GM12878 (cell line): ENCODE measurements at regions of chr4 and their contacts with region 1.

Region 1: GRCh38 chr4:169189372-169189771 is 81.4 kb downstream of the SH3RF1 start:
- DNase-seq: no peak
- ATAC-seq: peak; percentile 89
- H3K4me3 ChIP-seq: peak overlapping the region; percentile 37
- H3K27ac ChIP-seq: peak overlapping the region; percentile 52
- H3K4me1 ChIP-seq: peaks cover 17% of the 10 kb centered on the region; the same call in 1 of the 2 replicates
- H3K27me3 ChIP-seq: no peaks in the 10 kb centered on the region
- CTCF ChIP-seq: no peak
- EP300 ChIP-seq: no peak
- POLR2A ChIP-seq: no peak
- RAD21 ChIP-seq: no peak

Region 2: DNA sequence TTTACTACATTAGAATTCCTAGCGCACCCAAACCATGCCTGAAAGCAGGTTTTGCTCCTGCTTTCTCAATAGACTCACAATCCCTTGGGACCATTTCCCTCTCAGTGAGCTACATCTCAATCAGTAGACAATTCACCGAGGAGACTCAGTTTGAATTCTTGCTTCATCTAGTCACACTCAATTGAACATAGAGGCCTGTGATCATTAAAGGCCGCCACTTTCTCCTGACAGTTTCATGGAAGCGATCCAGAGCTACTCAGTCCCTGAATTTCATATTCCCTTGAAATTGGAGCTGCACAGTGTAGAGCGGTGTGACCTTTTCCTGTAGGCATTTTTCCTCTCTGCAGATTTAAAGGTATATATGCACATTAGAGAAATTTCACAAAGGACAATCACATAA is 1761.2 kb before region 1 on chr4:
- CTCF ChIA-PET with region 1: no interaction called
- POLR2A ChIA-PET with region 1: no interaction called
- RAD21 ChIA-PET with region 1: no interaction called
- SMC1A ChIA-PET with region 1: no interaction called
- in situ Hi-C with region 1: no loop called
- intact Hi-C with region 1: no loop called
- DNase-seq: no peak
- ATAC-seq: no peak
- H3K4me3 ChIP-seq: no peak overlapping the region
- H3K27ac ChIP-seq: no peak overlapping the region
- H3K4me1 ChIP-seq: no peaks in the 10 kb centered on the region
- H3K27me3 ChIP-seq: no peaks in the 10 kb centered on the region
- CTCF ChIP-seq: no peak
- EP300 ChIP-seq: no peak
- POLR2A ChIP-seq: no peak
- RAD21 ChIP-seq: no peak

Region 3: DNA sequence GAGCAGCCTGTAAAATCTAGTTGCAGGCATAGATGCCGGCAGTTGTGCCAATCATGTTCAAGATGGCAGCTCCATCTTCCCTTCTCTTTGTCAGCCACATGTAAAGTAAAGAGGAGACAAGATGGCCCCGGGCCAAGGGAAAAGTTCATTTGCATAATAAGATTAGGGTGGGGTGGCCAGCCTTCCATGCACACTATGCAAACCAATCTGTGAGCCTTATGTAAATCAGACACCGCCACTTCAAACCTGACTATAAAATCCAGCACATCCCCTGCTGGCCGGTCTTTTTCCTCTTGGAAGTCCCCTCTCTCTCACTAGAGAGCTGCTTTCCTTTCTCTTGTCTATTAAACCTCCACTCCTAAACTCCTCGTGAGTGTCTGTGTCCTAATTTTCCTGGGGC is 100.4 kb before region 1 on chr4:
- CTCF ChIA-PET with region 1: no interaction called
- POLR2A ChIA-PET with region 1: no interaction called
- RAD21 ChIA-PET with region 1: no interaction called
- SMC1A ChIA-PET with region 1: no interaction called
- in situ Hi-C with region 1: no loop called
- intact Hi-C with region 1: no loop called
- DNase-seq: no peak
- ATAC-seq: no peak
- H3K4me3 ChIP-seq: no peak overlapping the region
- H3K27ac ChIP-seq: no peak overlapping the region
- H3K4me1 ChIP-seq: 0 out of 2 replicates have a peak, but pooled peaks cover 4% of the 10 kb centered on the region
- H3K27me3 ChIP-seq: no peaks in the 10 kb centered on the region
- CTCF ChIP-seq: no peak
- EP300 ChIP-seq: no peak
- POLR2A ChIP-seq: no peak
- RAD21 ChIP-seq: no peak

Region 4: GRCh38 chr4:169167958-169168858 is 21.2 kb before region 1 on chr4:
- CTCF ChIA-PET with region 1: interaction called, 4 read pairs
- POLR2A ChIA-PET with region 1: interaction called, 7 read pairs
- RAD21 ChIA-PET with region 1: interaction called, 4 read pairs
- SMC1A ChIA-PET with region 1: interaction called, 11 read pairs
- in situ Hi-C with region 1: no loop called
- intact Hi-C with region 1: no loop called
- DNase-seq: peak; percentile 35
- ATAC-seq: peak; percentile 97
- H3K4me3 ChIP-seq: 0 out of 2 replicates have a peak overlapping the region, but pooled peaks have one; percentile 25
- H3K27ac ChIP-seq: no peak overlapping the region
- H3K4me1 ChIP-seq: peaks cover 5% of the 10 kb centered on the region; the same call in 1 of the 2 replicates
- H3K27me3 ChIP-seq: no peaks in the 10 kb centered on the region
- CTCF ChIP-seq: no peak
- EP300 ChIP-seq: no peak
- POLR2A ChIP-seq: no peak
- RAD21 ChIP-seq: no peak

Region 5: DNA sequence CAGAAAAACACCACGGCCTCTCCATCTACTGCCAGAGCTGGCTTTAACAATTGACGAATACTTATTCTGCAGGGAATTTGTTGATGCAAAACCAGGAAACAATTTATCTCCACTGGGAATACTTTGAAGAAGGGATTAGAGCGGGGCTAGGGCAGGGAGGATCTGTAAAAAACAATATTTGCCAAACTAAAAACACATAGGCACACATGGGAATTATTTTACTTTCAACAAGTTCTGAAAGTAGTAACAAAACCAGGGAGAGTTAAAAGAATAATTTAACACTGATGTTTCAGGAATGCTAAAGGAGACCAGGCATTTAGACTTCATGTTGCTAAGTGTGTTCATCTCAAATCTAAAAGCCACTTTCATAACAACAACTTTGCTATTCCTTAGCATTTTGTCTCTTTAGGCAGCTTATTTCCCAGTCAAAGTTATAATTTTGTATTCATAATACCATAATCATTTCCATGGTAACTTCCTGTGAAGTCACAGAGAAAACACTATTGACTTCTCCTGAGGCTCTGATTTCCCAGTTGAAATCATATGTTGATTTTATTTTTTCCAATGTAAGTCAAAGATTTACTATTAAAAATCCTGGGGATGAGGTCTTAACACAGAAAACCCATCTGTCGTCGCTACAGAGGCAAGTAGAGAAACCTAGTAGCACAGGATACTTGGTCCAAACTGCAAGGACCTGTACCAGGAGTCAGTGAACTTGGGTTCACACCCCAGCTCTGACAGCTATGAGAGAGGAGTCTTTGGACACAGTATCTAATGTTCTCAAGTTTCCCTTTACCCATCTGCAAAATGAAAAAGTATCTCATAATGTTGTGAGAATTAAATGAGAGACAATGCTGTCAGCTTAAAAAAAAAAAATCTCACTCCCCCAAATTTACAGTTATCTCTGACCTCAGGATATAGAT is 12.1 kb after region 1 on chr4:
- CTCF ChIA-PET with region 1: interaction called, 5 read pairs
- POLR2A ChIA-PET with region 1: interaction called, 6 read pairs
- RAD21 ChIA-PET with region 1: interaction called, 7 read pairs
- SMC1A ChIA-PET with region 1: interaction called, 13 read pairs
- in situ Hi-C with region 1: no loop called
- intact Hi-C with region 1: no loop called
- DNase-seq: no peak
- ATAC-seq: peak; percentile 41
- H3K4me3 ChIP-seq: no peak overlapping the region
- H3K27ac ChIP-seq: no peak overlapping the region; the same call in 1 of the 2 replicates
- H3K4me1 ChIP-seq: no peaks in the 10 kb centered on the region
- H3K27me3 ChIP-seq: no peaks in the 10 kb centered on the region
- CTCF ChIP-seq: no peak
- EP300 ChIP-seq: no peak
- POLR2A ChIP-seq: no peak
- RAD21 ChIP-seq: no peak